CD8-positive, alpha-beta T cell (primary cell): ENCODE measurements at regions of chr10 and their contacts with region 1.

Region 1: DNA sequence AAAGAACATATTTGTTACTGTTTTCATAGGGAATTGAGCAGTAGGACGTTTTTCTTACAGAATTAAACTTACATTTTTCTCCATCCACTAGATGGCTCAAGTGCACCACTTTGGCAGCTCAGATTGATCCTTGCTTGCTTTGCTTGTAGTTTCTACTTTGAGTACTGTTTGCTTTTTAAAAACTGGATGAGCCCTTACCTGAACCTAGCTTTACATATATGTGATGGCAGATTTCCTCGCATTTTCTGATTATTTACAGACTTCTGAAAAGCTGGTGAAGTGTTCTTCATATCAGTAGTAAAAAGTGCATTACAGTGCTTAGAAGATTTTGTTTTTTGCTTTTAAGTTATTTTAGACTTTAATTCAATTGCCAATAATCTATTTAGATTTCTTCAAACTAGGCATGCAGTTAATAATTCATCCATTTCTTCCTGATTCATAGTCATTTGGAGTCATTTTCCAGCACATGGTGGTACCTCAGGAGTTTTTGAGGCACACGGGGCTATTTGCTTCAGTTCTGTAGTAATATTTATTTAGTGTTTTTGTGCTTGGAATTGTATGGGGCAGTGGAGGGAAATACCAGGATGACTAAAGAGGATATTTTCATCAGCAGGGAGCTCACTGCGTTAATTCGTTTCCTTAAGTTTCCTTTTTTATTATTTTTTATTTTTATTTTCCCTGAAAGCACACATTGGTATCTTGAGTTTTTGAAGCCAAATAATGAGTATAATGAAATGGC is 57.3 kb downstream of the MAPK8 start:
- DNase-seq: peak in 4 of 9 experiments; percentile 13 to 59 (median 34)
- ATAC-seq: peak; percentile 31
- H3K4me3 ChIP-seq: no peak overlapping the region
- H3K4me3 Mint-ChIP-seq: no peak overlapping the region
- H3K27ac ChIP-seq: no peak overlapping the region
- H3K27ac Mint-ChIP-seq: no peak overlapping the region
- H3K4me1 ChIP-seq: no peaks in the 10 kb centered on the region
- H3K4me1 Mint-ChIP-seq: peaks cover 42% of the 10 kb centered on the region
- H3K27me3 ChIP-seq: no peaks in the 10 kb centered on the region
- H3K27me3 Mint-ChIP-seq: no peaks in the 10 kb centered on the region
- CTCF ChIP-seq: peak; percentile 67

Region 2: GRCh38 chr10:48306265-48306869 is 57.4 kb before region 1 on chr10 and contains the start of gene MAPK8:
- CTCF ChIA-PET with region 1: no interaction called
- POLR2A ChIA-PET with region 1: no interaction called
- intact Hi-C with region 1: loop called in 1 of 2 experiments (anchors 5 kb)
- DNase-seq: peak; percentile 83 to 97 (median 91)
- ATAC-seq: peak; percentile 87
- H3K4me3 ChIP-seq: peak within 1 kb of the TSS; percentile 61 to 77
- H3K4me3 Mint-ChIP-seq: peak within 1 kb of the TSS; percentile 87
- H3K27ac ChIP-seq: peak within 1 kb of the TSS; percentile 75 to 77
- H3K27ac Mint-ChIP-seq: peak within 1 kb of the TSS; percentile 83
- H3K4me1 ChIP-seq: peaks cover 18% of the 10 kb centered on the region
- H3K4me1 Mint-ChIP-seq: peaks cover 27% of the 10 kb centered on the region
- H3K27me3 ChIP-seq: no peaks in the 10 kb centered on the region
- H3K27me3 Mint-ChIP-seq: no peaks in the 10 kb centered on the region
- CTCF ChIP-seq: no peak
- total RNA-seq, gene MAPK8: 50.1 to 54.7 TPM

Region 3: DNA sequence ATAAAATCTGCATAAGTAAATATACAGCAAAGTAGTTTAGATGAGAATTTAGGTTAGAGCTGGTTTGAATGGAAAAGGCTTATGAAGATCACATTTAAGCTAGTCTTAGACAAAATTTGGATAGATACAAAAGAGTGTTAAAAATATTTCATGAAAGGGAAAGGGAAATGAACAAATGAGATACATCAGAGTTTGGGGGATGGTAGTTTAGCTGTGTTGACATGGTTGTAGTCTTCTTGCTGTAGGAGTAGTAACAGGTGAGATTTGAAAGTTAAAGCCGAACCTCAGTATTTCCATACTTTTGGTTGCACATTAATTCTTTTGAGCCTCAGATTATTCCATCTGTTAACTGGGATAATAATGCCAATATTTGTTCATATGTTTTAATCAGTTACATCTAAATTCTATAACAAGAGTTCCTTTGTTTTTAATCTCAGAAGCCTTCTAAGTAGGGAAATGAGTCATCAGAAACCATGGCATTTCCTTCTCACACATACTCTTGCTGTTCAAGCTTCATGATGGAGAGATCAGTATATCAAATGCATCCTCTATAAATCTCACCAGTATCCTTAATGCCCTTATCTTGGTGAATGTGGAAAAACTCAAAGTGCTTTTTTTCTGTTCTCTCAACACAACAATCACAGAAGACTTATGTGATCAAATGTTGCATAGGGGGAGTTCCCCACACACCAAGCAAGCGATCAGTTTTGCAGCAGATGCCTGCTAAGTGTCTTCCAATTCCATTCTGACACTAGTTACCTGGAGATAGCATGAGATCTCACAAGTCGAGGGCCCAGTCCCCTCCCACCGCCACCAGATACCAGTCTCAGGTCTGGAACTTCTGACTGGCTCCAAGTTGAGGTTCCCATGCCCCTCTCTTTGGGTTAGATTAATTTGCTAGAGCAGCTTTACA is 27.4 kb after region 1 on chr10:
- CTCF ChIA-PET with region 1: no interaction called
- POLR2A ChIA-PET with region 1: no interaction called
- intact Hi-C with region 1: no loop called
- DNase-seq: peak in 2 of 9 experiments; percentile 7 to 14
- ATAC-seq: peak; percentile 34
- H3K4me3 ChIP-seq: no peak overlapping the region
- H3K4me3 Mint-ChIP-seq: peak overlapping the region; percentile 1
- H3K27ac ChIP-seq: no peak overlapping the region
- H3K27ac Mint-ChIP-seq: no peak overlapping the region
- H3K4me1 ChIP-seq: peaks cover 24% of the 10 kb centered on the region
- H3K4me1 Mint-ChIP-seq: peaks cover 58% of the 10 kb centered on the region
- H3K27me3 ChIP-seq: no peaks in the 10 kb centered on the region
- H3K27me3 Mint-ChIP-seq: no peaks in the 10 kb centered on the region
- CTCF ChIP-seq: no peak

Region 4: GRCh38 chr10:48506147-48506917 is 142.5 kb after region 1 on chr10:
- CTCF ChIA-PET with region 1: no interaction called
- POLR2A ChIA-PET with region 1: no interaction called
- intact Hi-C with region 1: loop called (anchors 2 to 5 kb)
- DNase-seq: peak in 2 of 9 experiments; percentile 9 to 43
- ATAC-seq: no peak
- H3K4me3 ChIP-seq: no peak overlapping the region
- H3K4me3 Mint-ChIP-seq: no peak overlapping the region
- H3K27ac ChIP-seq: no peak overlapping the region
- H3K27ac Mint-ChIP-seq: no peak overlapping the region
- H3K4me1 ChIP-seq: no peaks in the 10 kb centered on the region
- H3K4me1 Mint-ChIP-seq: no peaks in the 10 kb centered on the region
- H3K27me3 ChIP-seq: no peaks in the 10 kb centered on the region
- H3K27me3 Mint-ChIP-seq: no peaks in the 10 kb centered on the region
- CTCF ChIP-seq: no peak

Region 5: GRCh38 chr10:48608279-48608681 is 244.5 kb after region 1 on chr10:
- CTCF ChIA-PET with region 1: no interaction called
- POLR2A ChIA-PET with region 1: no interaction called
- intact Hi-C with region 1: loop called (anchors 5 kb)
- DNase-seq: peak in 3 of 9 experiments; percentile 33 to 49 (median 37)
- ATAC-seq: no peak
- H3K4me3 ChIP-seq: no peak overlapping the region
- H3K4me3 Mint-ChIP-seq: no peak overlapping the region
- H3K27ac ChIP-seq: no peak overlapping the region
- H3K27ac Mint-ChIP-seq: no peak overlapping the region
- H3K4me1 ChIP-seq: peaks cover 8% of the 10 kb centered on the region
- H3K4me1 Mint-ChIP-seq: peaks cover 4% of the 10 kb centered on the region
- H3K27me3 ChIP-seq: peaks cover 0 to 2% of the 10 kb centered on the region in 2 experiments
- H3K27me3 Mint-ChIP-seq: peaks cover 43% of the 10 kb centered on the region
- CTCF ChIP-seq: peak; percentile 43

Region 6: GRCh38 chr10:49512121-49512809 is 1148.5 kb after region 1 on chr10:
- CTCF ChIA-PET with region 1: no interaction called
- POLR2A ChIA-PET with region 1: no interaction called
- intact Hi-C with region 1: loop called (anchors 5 to 10 kb)
- DNase-seq: peak in 3 of 9 experiments; percentile 20 to 64 (median 47)
- ATAC-seq: peak; percentile 58
- H3K4me3 ChIP-seq: no peak overlapping the region
- H3K4me3 Mint-ChIP-seq: no peak overlapping the region
- H3K27ac ChIP-seq: no peak overlapping the region
- H3K27ac Mint-ChIP-seq: no peak overlapping the region
- H3K4me1 ChIP-seq: peaks cover 20% of the 10 kb centered on the region
- H3K4me1 Mint-ChIP-seq: peaks cover 27% of the 10 kb centered on the region
- H3K27me3 ChIP-seq: no peaks in the 10 kb centered on the region
- H3K27me3 Mint-ChIP-seq: peaks cover 7% of the 10 kb centered on the region
- CTCF ChIP-seq: peak; percentile 73

Region 7: DNA sequence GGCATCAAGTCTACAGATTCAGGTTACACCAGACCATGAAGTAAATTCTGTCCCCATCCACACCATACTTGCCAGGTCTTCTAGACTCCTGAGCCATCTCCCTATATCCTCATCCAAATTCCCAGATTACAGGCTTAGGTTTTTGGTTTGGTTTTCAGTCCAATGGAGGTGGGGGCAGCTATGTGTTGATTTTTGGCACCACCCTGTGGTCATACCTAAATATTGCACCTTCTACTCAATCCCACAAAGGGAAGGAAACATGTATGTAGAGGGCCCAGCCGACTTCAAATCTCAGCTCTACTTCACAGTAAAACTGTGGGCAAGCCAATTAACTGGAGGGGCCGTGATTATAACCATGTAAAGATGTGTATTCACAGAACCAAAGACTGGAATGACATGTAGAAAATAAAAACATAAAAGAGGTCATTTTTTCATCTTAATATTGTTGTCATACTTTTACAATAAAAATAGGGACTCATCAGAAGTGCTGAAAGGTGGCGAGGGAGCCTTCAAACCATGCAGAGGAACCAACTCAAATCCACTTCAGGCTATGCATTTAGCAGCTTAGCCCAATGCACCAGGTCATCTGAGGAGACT is 1155.3 kb after region 1 on chr10:
- CTCF ChIA-PET with region 1: interaction called, 3 read pairs
- POLR2A ChIA-PET with region 1: no interaction called
- intact Hi-C with region 1: loop called (anchors 5 to 10 kb)
- DNase-seq: peak in 3 of 9 experiments; percentile 28 to 65 (median 54)
- ATAC-seq: peak; percentile 79
- H3K4me3 ChIP-seq: no peak overlapping the region
- H3K4me3 Mint-ChIP-seq: no peak overlapping the region
- H3K27ac ChIP-seq: no peak overlapping the region
- H3K27ac Mint-ChIP-seq: no peak overlapping the region
- H3K4me1 ChIP-seq: no peaks in the 10 kb centered on the region
- H3K4me1 Mint-ChIP-seq: peaks cover 5% of the 10 kb centered on the region
- H3K27me3 ChIP-seq: no peaks in the 10 kb centered on the region
- H3K27me3 Mint-ChIP-seq: no peaks in the 10 kb centered on the region
- CTCF ChIP-seq: peak; percentile 69